Mammary epithelial cell (primary cell): ENCODE measurements at regions of chr2 and their contacts with region 1.

Region 1: DNA sequence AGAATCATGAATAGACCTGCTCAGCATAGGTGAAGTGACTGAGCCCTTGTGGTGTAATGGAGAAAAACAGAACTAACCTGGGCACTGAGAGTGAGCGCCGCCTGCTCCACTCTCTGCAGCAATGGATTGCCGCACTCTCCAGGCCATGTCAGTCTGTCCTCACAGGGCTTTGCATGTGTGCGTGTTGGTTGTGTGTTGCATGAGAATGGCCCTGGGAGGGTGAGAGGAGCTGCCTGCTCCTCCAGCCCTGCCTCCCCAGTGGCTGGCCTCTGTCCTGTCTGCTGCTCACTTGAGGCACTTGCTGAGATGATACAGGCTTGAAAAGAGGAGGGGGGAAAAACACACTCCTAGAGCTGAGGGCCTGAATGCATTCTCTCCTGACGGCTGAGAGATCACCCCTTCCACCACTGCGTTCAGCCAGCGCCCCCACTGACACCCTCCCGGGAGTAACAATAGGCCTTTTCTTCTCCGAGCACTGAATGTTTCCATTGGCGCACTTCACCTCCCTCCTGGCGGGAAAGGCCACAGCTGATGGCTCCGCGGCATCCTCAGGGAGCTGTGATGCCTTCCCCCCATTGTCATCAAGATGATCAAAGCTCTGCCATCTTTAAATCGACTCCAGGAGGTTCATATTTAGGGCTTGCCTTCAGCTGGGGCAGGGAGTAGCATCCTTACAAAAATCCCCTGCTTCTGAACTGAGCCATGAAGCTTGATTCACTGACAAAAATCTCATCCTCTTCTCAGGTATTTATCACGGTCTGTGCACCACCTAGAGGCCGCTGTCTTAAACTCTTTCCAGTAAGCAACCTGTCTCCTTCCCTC is 49.9 kb upstream of the DAPL1 start:
- DNase-seq: peak; percentile 51
- H3K4me3 ChIP-seq: no peak overlapping the region
- H3K27ac ChIP-seq: no peak overlapping the region
- H3K4me1 ChIP-seq: no peaks in the 10 kb centered on the region
- H3K27me3 ChIP-seq: no peaks in the 10 kb centered on the region
- CTCF ChIP-seq: peak; percentile 68 to 69

Region 2: DNA sequence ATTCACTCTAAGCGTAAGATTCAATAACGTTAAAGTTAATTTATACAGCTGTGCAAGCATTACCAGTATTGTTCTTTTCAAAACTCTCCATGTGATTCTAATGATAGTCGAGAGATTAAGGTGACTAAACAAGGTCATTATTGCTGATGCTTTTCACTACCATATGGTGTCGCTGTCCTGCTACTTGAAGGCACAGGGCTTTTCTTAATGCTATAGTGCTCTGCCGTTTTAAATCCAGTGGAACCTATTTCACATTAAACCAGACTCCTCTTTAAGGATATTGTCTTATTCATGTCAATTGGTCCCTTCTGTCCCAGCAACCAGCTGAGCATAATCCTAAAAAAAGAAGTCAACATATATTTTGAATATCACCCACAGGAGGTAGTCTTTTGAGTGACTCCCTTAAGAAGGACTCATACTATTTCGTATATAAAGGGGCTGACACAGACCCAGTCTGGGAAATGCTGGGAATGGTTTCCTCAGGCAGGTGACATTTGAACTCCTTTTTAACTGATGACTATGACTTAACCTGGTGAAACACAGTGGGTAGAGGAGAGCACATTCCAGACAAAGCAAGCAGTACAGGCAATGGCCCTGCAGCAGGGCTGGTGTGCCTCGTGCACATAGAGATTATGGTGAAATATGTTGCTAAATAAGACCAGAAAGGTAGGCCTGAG is 1247.5 kb before region 1 on chr2:
- CTCF ChIA-PET with region 1: no interaction called
- dilution Hi-C with region 1: no loop called
- in situ Hi-C with region 1: no loop called
- intact Hi-C with region 1: loop called (anchors 5 kb)
- DNase-seq: peak; percentile 31
- H3K4me3 ChIP-seq: no peak overlapping the region
- H3K27ac ChIP-seq: no peak overlapping the region
- H3K4me1 ChIP-seq: no peaks in the 10 kb centered on the region
- H3K27me3 ChIP-seq: no peaks in the 10 kb centered on the region
- CTCF ChIP-seq: peak; percentile 83 to 85

Region 3: DNA sequence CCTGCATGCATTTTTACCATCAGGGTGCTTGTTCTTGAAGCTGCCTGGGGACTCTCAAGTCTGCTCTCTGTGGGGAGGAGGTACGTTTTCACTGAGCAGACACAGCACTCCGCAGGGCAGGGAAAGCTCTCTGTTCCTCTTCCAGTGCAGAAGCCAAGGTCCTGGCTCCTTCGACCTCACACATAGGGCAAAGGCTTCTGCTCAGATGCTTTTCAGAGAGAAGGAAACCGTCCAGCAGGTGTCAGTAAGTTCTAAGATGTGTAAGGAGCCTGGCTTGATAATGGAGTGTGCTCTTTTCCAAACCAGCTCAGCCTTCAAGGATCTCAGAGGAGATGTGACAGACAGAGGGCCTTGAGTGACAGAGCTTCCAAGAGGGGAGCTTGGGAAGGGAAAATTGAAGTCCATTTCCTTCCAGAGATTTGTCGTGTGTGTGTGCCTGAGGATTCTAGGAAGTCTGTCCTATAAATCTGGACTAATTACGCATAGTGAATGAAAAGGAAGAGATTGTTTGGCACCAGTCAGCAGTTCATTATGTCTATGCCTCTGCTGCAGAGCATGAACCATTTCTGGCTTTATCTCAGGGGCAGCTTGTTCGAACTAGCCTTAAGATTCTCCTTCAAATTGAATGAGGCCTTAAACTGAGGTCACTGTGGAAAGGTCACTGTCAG is 710.9 kb before region 1 on chr2:
- CTCF ChIA-PET with region 1: interaction called, 3 read pairs
- dilution Hi-C with region 1: no loop called
- in situ Hi-C with region 1: loop called (anchors 5 to 10 kb)
- intact Hi-C with region 1: loop called (anchors 1 kb)
- DNase-seq: peak; percentile 43
- H3K4me3 ChIP-seq: no peak overlapping the region
- H3K27ac ChIP-seq: no peak overlapping the region
- H3K4me1 ChIP-seq: no peaks in the 10 kb centered on the region
- H3K27me3 ChIP-seq: peaks cover 3% of the 10 kb centered on the region
- CTCF ChIP-seq: peak; percentile 27 to 65

Region 4: DNA sequence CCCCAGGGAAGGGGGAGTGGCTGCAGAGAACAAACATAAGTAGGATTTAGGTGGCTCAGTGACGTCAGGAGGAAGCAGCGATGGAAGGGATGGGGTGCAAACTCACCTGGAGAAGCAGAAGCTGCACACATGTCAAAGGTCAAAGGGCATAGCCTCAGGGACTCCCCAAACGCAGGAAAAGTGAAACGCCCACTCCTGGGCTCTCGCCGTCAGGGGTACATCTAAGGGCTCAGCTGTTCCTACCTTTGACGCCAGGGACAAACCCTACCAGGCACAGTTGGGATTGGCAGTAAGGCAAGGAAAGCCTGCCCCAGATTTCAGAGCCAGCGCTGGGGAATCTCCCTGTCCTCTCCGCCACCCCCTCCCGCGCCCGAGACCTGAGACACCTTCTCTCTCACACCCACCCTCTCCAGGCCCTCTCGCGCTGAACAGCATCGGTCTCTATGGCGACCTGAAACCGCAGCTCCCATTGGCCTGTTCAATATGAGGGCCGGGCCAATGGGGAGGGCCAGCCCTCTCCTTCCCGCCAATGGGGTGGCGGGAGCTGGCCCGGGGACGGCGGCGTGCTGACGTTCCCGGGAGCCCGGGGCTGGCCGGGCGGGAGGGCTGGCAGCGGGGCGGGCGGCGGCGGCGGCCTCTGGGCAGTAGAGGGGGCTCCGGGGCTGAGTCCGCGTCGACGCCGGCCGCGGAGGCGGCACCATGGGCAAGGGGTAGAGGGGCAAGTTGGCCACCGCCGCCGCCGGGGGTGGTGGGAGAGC is 288.8 kb before region 1 on chr2 and contains the starts of genes CCDC148 and PKP4:
- CTCF ChIA-PET with region 1: no interaction called
- dilution Hi-C with region 1: no loop called
- in situ Hi-C with region 1: loop called in 1 of 2 experiments (anchors 10 kb)
- intact Hi-C with region 1: loop called (anchors 1 kb)
- DNase-seq: peak; percentile 94
- H3K4me3 ChIP-seq: peak within 1 kb of the TSS; percentile 77 to 86 (median 86)
- H3K27ac ChIP-seq: peak within 1 kb of the TSS; percentile 74
- H3K4me1 ChIP-seq: peaks cover 22% of the 10 kb centered on the region
- H3K27me3 ChIP-seq: no peaks in the 10 kb centered on the region
- CTCF ChIP-seq: peak in 1 of 2 donors; percentile 23
- total RNA-seq, gene CCDC148: 0.71 to 1.3 TPM
- total RNA-seq, gene PKP4: 64.8 to 82.6 TPM

Region 5: DNA sequence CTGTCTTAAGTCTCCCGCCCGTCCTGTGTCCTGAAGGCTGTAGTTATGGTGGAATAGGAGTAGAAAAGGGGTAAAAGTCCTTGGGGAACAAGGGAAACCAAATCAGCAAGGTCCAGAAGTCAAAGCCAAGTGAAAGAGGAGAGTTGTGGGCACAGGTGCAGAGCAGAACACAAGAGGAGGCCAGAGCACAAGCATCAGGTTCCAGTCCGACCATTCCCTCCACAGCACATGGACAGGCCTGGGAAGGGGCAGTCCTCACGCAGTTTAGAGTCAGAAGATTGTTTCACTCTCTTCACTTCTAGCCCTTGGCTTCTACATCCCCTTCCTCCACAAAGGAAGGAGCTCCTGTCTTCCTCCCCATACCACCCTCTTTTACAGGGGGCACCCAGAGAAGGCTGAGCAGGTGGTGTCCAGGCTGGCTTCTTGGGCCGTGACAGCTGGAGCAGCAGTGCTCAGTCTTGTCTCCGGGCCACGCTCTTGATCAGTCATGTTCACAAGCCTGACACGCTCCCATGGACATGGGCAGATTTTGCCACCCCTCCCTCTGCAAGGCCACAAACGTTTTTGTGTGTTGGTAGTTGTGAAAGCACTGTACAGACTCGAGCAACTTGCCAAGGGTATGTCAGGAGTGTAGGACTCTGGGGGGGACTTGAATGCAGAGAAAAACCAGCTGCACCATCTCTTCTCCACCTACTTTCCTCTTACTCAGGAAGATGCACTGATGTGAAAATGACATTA is 88.6 kb before region 1 on chr2:
- CTCF ChIA-PET with region 1: no interaction called
- dilution Hi-C with region 1: loop called (anchors 5 kb)
- in situ Hi-C with region 1: no loop called
- intact Hi-C with region 1: no loop called
- DNase-seq: no peak
- H3K4me3 ChIP-seq: no peak overlapping the region
- H3K27ac ChIP-seq: no peak overlapping the region
- H3K4me1 ChIP-seq: no peaks in the 10 kb centered on the region
- H3K27me3 ChIP-seq: no peaks in the 10 kb centered on the region
- CTCF ChIP-seq: no peak

Region 6: GRCh38 chr2:158686210-158686691 is 59.0 kb before region 1 on chr2:
- CTCF ChIA-PET with region 1: no interaction called
- dilution Hi-C with region 1: no loop called
- in situ Hi-C with region 1: no loop called
- intact Hi-C with region 1: loop called (anchors 5 kb)
- DNase-seq: no peak
- H3K4me3 ChIP-seq: no peak overlapping the region
- H3K27ac ChIP-seq: no peak overlapping the region
- H3K4me1 ChIP-seq: peaks cover 19% of the 10 kb centered on the region
- H3K27me3 ChIP-seq: no peaks in the 10 kb centered on the region
- CTCF ChIP-seq: no peak

Region 7: GRCh38 chr2:158817588-158817987 is 72.3 kb after region 1 on chr2:
- CTCF ChIA-PET with region 1: no interaction called
- dilution Hi-C with region 1: no loop called
- in situ Hi-C with region 1: no loop called
- intact Hi-C with region 1: no loop called
- DNase-seq: no peak
- H3K4me3 ChIP-seq: no peak overlapping the region
- H3K27ac ChIP-seq: no peak overlapping the region
- H3K4me1 ChIP-seq: peaks cover 14% of the 10 kb centered on the region
- H3K27me3 ChIP-seq: no peaks in the 10 kb centered on the region
- CTCF ChIP-seq: no peak